OCI-LY7 (cell line): ENCODE measurements at regions of chr1 and their contacts with region 1.

Region 1: DNA sequence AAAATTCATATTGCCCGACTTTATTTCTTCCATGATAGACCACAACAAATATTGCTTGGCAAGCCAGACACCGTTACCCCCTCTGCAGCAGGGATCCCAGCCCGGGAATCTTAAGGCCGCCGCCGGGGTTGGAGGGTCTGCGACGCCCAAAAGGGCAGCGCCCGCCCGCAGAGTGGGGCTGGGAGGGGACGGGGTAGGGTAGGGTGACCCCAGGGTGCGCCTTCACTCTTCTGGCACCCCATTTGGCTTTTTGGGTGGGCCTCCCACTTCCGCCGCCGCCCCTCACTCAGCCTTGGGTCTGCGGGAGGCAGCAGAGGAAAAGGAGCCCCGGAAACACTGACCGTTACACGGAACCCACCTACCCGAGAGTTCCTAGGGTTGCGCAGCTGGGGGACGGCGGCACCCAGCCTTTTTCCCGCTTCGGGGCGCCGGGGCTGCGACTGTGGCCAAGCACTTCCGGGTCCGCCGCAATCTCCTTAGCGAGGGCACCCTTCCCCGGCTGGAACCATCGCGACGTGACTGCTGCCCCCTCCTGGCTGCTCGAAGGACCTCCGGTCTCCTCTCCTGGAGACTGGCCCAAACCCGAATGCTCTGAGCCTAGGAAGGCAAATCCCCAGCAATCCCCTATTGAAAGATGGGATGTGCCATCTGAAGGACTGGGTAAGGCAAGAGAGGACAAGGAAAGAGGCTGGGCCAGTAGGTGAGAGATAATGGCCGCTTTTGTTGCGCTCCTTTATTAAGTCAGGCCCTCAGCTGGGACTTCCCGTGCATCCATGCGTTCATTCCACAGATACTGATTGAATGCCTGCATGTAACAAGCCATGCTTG is at the start of gene PIGC:
- DNase-seq: peak; percentile 92
- H3K4me3 ChIP-seq: peak within 1 kb of the TSS; percentile 86
- H3K27ac ChIP-seq: peak within 1 kb of the TSS; percentile 21
- H3K4me1 ChIP-seq: peaks cover 8% of the 10 kb centered on the region
- CTCF ChIP-seq: peak; percentile 86
- total RNA-seq, gene PIGC: 14.7 and 15.4 TPM in 2 replicates

Region 2: DNA sequence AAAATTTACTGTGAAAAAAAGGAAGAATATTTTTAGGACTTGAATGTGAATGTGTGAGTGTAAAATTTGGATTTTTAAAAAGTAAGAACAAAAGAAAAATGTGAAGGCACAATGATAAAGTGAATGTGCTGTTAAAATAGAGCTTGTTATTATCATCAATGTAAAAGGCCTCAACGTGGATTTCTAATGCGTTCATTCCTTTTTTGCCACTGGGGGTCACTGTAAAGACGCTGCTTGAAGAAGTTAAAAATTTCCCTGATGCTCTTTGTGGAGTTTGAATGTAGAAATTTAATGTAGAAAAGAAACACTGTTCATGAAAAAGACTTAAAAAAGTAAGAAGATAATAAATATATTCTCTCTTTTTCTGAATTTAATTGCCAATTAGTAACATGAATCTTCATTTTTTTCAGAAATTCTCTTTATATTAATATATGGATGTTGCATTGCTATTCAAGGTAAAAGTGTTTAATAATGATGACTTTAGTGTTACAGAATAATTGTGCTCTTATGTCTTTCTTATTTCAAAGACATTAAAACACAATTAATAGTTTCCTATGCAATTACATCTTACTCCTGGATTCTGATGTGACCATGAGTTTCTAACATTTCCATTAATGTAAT is 441.0 kb before region 1 on chr1:
- CTCF ChIA-PET with region 1: no interaction called
- POLR2A ChIA-PET with region 1: interaction called, 5 read pairs
- intact Hi-C with region 1: loop called (anchors 5 kb)
- DNase-seq: peak; percentile 55
- H3K4me3 ChIP-seq: no peak overlapping the region
- H3K27ac ChIP-seq: no peak overlapping the region
- H3K4me1 ChIP-seq: no peaks in the 10 kb centered on the region
- CTCF ChIP-seq: peak; percentile 92